ENCODE measurements at regions of chr12 and their contacts with region 1.

Region 1: GRCh38 chr12:45762185-45763110 is 32.9 kb downstream of the ARID2 start:
- DNase-seq: peak; percentile 78
- ATAC-seq: peak; percentile 80
- H3K4me3 ChIP-seq: no peak overlapping the region
- H3K27ac ChIP-seq: no peak overlapping the region
- H3K4me1 ChIP-seq: no peaks in the 10 kb centered on the region
- H3K27me3 ChIP-seq: no peaks in the 10 kb centered on the region
- CTCF ChIP-seq: peak; percentile 83
- POLR2A ChIP-seq: no peak
- RAD21 ChIP-seq: peak; percentile 67

Region 2: DNA sequence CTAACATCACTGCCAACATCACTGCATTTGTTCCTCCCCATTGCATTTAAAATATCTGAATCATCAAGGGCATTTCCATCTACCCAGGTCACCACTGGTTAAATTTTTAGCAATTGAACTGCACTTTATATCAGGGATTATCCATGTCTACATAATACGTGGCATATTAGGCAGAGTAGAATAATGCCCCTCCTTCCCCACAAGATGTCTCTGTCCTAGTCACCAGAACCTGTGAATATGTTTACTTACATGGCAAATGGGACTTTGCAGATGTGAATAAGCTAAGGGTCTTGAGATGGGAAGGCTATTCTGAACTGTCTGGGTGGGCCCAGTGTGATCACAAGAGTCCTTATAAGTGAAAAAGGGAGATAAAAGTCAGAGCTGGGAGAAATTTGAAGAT is 214.6 kb before region 1 on chr12:
- CTCF ChIA-PET with region 1: no interaction called
- POLR2A ChIA-PET with region 1: no interaction called
- dilution Hi-C with region 1: no loop called
- in situ Hi-C with region 1: no loop called
- intact Hi-C with region 1: no loop called
- DNase-seq: peak; percentile 13
- ATAC-seq: peak; percentile 46; the same call in 1 of the 2 replicates
- H3K4me3 ChIP-seq: no peak overlapping the region
- H3K27ac ChIP-seq: no peak overlapping the region
- H3K4me1 ChIP-seq: no peaks in the 10 kb centered on the region
- H3K27me3 ChIP-seq: peaks cover 3% of the 10 kb centered on the region
- CTCF ChIP-seq: peak; percentile 21; the same call in 1 of the 2 replicates
- POLR2A ChIP-seq: no peak
- RAD21 ChIP-seq: no peak

Region 3: DNA sequence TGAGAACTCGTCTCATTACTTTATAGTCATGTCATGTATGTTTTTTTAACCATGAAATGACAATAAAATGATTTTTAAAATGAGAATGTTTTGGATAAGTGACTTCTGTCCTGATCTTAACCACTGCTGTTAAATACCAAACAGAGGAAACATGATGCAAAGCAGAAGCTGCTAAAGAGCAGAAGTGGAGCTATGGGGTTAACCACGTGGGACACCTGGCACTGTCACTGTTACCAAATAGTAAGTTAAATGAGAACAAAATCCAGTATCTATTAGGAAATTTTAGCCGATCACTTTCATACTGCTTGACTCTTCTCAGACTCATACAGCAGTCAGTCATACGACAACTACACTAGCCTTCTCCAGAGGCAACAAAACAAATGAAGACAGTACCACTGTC is 145.5 kb after region 1 on chr12:
- CTCF ChIA-PET with region 1: no interaction called
- POLR2A ChIA-PET with region 1: no interaction called
- dilution Hi-C with region 1: no loop called
- in situ Hi-C with region 1: no loop called
- intact Hi-C with region 1: loop called (anchors 5 kb)
- DNase-seq: no peak
- ATAC-seq: no peak
- H3K4me3 ChIP-seq: no peak overlapping the region
- H3K27ac ChIP-seq: no peak overlapping the region
- H3K4me1 ChIP-seq: peaks cover 5% of the 10 kb centered on the region
- H3K27me3 ChIP-seq: no peaks in the 10 kb centered on the region
- CTCF ChIP-seq: no peak
- POLR2A ChIP-seq: no peak
- RAD21 ChIP-seq: no peak

Region 4: GRCh38 chr12:46005151-46005797 is 242.8 kb after region 1 on chr12:
- CTCF ChIA-PET with region 1: interaction called, 6 read pairs
- POLR2A ChIA-PET with region 1: no interaction called
- dilution Hi-C with region 1: no loop called
- in situ Hi-C with region 1: no loop called
- intact Hi-C with region 1: loop called (anchors 5 kb)
- DNase-seq: peak; percentile 34
- ATAC-seq: no peak
- H3K4me3 ChIP-seq: no peak overlapping the region
- H3K27ac ChIP-seq: no peak overlapping the region
- H3K4me1 ChIP-seq: no peaks in the 10 kb centered on the region
- H3K27me3 ChIP-seq: peaks cover 16% of the 10 kb centered on the region
- CTCF ChIP-seq: peak; percentile 54
- POLR2A ChIP-seq: no peak
- RAD21 ChIP-seq: peak; percentile 44